ENCODE measurements at regions of chr12 and their contacts with region 1.

Region 1: DNA sequence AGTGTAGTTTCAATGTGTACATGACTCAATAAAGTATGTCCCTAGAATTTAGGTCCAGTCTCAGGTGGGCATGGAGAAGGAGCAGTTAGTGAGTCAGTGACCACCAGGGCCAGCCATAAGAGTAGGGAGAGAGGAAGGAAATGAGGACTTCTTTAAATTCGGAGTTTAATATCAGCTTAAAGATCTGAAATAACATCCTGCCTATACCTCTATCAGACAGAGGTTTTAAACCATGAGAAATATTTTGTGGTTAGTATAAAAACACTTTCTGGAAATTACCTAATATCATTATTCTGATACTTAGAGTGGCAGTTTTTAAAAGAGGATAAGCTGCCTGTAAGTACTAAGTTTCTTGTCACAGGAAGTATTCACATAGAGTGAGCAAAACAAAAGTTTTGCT is 61.7 kb upstream of the ST8SIA1 start:
- DNase-seq: peak; percentile 59 to 83 (median 67)
- H3K4me3 ChIP-seq: no peak overlapping the region
- H3K4me3 Mint-ChIP-seq: peak overlapping the region; percentile 36 to 83 (median 78)
- H3K27ac ChIP-seq: peak overlapping the region; percentile 61
- H3K27ac Mint-ChIP-seq: peak overlapping the region; percentile 83 to 96 (median 91)
- H3K4me1 ChIP-seq: peaks cover 60% of the 10 kb centered on the region
- H3K4me1 Mint-ChIP-seq: peaks cover 34 to 47% (median 42%) of the 10 kb centered on the region in 4 donors
- H3K27me3 ChIP-seq: no peaks in the 10 kb centered on the region
- H3K27me3 Mint-ChIP-seq: no peaks in the 10 kb centered on the region

Region 2: DNA sequence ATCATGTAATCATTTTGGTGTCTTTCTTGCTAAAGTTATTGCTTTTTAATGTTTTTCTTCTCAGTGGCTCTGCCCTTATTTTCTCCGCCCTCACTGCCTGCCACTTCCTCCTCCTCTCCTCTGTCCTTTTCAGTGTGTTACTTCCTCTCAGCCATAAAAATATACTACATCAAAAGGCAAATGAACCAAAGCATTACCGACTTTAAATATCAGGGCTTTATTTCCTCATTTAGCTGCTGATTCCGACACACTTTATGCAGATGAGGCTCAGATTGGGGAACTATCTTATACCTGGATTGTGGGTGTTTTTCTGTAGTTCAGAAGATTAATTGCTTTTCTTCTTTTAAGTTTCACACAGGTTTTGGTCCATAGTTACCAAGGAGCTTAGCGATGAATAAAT is 232.1 kb before region 1 on chr12:
- CTCF ChIA-PET with region 1: no interaction called
- POLR2A ChIA-PET with region 1: interaction called, 3 read pairs
- intact Hi-C with region 1: loop called (anchors 5 kb)
- DNase-seq: peak in 4 of 5 donors; percentile 28 to 57 (median 40)
- H3K4me3 ChIP-seq: no peak overlapping the region
- H3K4me3 Mint-ChIP-seq: peak overlapping the region; percentile 33 to 78 (median 56)
- H3K27ac ChIP-seq: peak overlapping the region; percentile 40
- H3K27ac Mint-ChIP-seq: peak overlapping the region; percentile 31 to 89 (median 72)
- H3K4me1 ChIP-seq: peaks cover 58% of the 10 kb centered on the region
- H3K4me1 Mint-ChIP-seq: peaks cover 40 to 57% (median 49%) of the 10 kb centered on the region in 4 donors
- H3K27me3 ChIP-seq: no peaks in the 10 kb centered on the region
- H3K27me3 Mint-ChIP-seq: no peaks in the 10 kb centered on the region

Region 3: GRCh38 chr12:22350886-22351285 is 45.4 kb before region 1 on chr12:
- CTCF ChIA-PET with region 1: no interaction called
- POLR2A ChIA-PET with region 1: no interaction called
- intact Hi-C with region 1: loop called (anchors 5 kb)
- DNase-seq: no peak
- H3K4me3 ChIP-seq: no peak overlapping the region
- H3K4me3 Mint-ChIP-seq: no peak overlapping the region
- H3K27ac ChIP-seq: no peak overlapping the region
- H3K27ac Mint-ChIP-seq: no peak overlapping the region
- H3K4me1 ChIP-seq: no peaks in the 10 kb centered on the region
- H3K4me1 Mint-ChIP-seq: no peaks in the 10 kb centered on the region
- H3K27me3 ChIP-seq: no peaks in the 10 kb centered on the region
- H3K27me3 Mint-ChIP-seq: no peaks in the 10 kb centered on the region

Region 4: GRCh38 chr12:22409377-22410164 is 13.3 kb after region 1 on chr12:
- CTCF ChIA-PET with region 1: interaction called, 38 read pairs
- POLR2A ChIA-PET with region 1: interaction called, 133 read pairs
- intact Hi-C with region 1: loop called (anchors 1 kb)
- DNase-seq: peak; percentile 73 to 82 (median 75)
- H3K4me3 ChIP-seq: peak overlapping the region in 1 of 2 donors; percentile 51
- H3K4me3 Mint-ChIP-seq: peak overlapping the region; percentile 75 to 92 (median 86)
- H3K27ac ChIP-seq: peak overlapping the region; percentile 62
- H3K27ac Mint-ChIP-seq: peak overlapping the region; percentile 92 to 96 (median 94)
- H3K4me1 ChIP-seq: peaks cover 58% of the 10 kb centered on the region
- H3K4me1 Mint-ChIP-seq: peaks cover 27 to 47% (median 40%) of the 10 kb centered on the region in 4 donors
- H3K27me3 ChIP-seq: no peaks in the 10 kb centered on the region
- H3K27me3 Mint-ChIP-seq: no peaks in the 10 kb centered on the region

Region 5: GRCh38 chr12:22473212-22473611 is 77.0 kb after region 1 on chr12:
- CTCF ChIA-PET with region 1: no interaction called
- POLR2A ChIA-PET with region 1: no interaction called
- intact Hi-C with region 1: no loop called
- DNase-seq: peak in 1 of 5 donors; percentile 13
- H3K4me3 ChIP-seq: no peak overlapping the region
- H3K4me3 Mint-ChIP-seq: peak overlapping the region in 7 of 8 donors; percentile 13 to 69 (median 55)
- H3K27ac ChIP-seq: no peak overlapping the region
- H3K27ac Mint-ChIP-seq: peak overlapping the region in 5 of 7 donors; percentile 49 to 89 (median 63)
- H3K4me1 ChIP-seq: peaks cover 10% of the 10 kb centered on the region
- H3K4me1 Mint-ChIP-seq: peaks cover 10 to 17% (median 12%) of the 10 kb centered on the region in 4 donors
- H3K27me3 ChIP-seq: no peaks in the 10 kb centered on the region
- H3K27me3 Mint-ChIP-seq: no peaks in the 10 kb centered on the region

Measured in CD4-positive, alpha-beta memory T cell (primary cell).